WTC11 (cell line): ENCODE measurements at regions of chr13 and their contacts with region 1.

Region 1: GRCh38 chr13:26502826-26503225 is 54.7 kb upstream of the WASF3 start:
- DNase-seq: no peak
- ATAC-seq: peak; percentile 74
- H3K4me3 Mint-ChIP-seq: no peak overlapping the region
- H3K27ac Mint-ChIP-seq: no peak overlapping the region
- H3K4me1 Mint-ChIP-seq: peaks cover 11% of the 10 kb centered on the region
- H3K27me3 Mint-ChIP-seq: no peaks in the 10 kb centered on the region; the same call in 1 of the 2 replicates
- CTCF ChIP-seq: no peak

Region 2: DNA sequence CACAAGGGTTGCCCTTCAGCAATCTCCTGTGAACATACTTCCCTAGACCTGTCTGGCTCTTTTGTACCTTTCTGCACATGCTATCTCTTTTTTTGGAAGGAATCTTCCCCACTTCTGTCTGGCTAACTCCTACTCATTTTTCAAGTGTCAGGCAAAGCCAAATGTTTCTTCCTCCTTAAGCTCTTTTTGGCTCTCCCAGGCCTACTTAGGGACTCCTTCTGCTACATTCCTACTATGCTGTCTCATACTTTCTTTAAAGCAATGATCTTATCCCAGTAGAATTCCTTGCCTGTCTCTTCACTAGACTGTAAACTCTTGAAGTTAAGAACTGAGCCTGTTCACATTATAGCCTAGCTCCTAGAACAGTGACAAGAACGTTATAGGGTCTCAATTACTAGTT is 60.3 kb before region 1 on chr13:
- CTCF ChIA-PET with region 1: interaction called, 15 read pairs
- POLR2A ChIA-PET with region 1: no interaction called
- DNase-seq: no peak
- ATAC-seq: no peak
- H3K4me3 Mint-ChIP-seq: no peak overlapping the region
- H3K27ac Mint-ChIP-seq: no peak overlapping the region
- H3K4me1 Mint-ChIP-seq: no peaks in the 10 kb centered on the region
- H3K27me3 Mint-ChIP-seq: no peaks in the 10 kb centered on the region; the same call in 1 of the 2 replicates
- CTCF ChIP-seq: no peak

Region 3: DNA sequence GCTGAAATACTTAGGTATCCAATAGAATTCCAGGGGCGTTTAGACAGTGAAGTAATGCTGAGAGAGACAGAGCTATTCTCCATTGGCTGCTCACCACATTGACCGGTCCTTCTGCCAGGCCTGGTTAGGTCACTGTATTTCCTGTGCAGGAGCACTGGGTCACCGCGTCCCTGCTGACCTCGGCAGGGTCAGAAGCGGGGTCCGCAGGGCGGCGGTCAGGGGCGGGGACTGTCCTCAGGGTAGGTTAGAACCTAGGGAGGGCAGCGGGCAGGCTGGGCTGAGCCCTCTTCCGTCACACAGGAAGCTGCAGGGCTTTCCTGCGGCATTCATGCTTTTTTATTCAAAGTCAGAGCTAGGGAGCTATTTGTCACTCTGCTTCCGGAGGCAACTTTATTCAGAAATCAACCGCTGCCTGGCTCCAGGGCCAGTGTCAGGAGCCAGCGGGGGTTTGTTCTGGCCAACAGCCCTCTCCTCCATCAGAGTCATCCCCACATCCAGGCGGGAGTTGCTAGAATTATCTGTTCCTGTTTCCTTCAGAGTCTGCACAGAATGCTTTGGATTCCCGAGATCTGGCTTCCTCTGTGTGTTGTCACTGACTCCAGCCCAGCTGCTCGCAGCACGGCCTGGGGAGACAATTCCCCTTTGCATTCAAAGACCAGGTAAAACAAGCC is 26.6 kb before region 1 on chr13:
- CTCF ChIA-PET with region 1: interaction called, 32 read pairs
- POLR2A ChIA-PET with region 1: no interaction called
- DNase-seq: peak; percentile 51
- ATAC-seq: peak; percentile 60
- H3K4me3 Mint-ChIP-seq: peak overlapping the region; percentile 68
- H3K27ac Mint-ChIP-seq: peak overlapping the region; percentile 97
- H3K4me1 Mint-ChIP-seq: peaks cover 53% of the 10 kb centered on the region
- H3K27me3 Mint-ChIP-seq: no peaks in the 10 kb centered on the region
- CTCF ChIP-seq: no peak

Region 4: DNA sequence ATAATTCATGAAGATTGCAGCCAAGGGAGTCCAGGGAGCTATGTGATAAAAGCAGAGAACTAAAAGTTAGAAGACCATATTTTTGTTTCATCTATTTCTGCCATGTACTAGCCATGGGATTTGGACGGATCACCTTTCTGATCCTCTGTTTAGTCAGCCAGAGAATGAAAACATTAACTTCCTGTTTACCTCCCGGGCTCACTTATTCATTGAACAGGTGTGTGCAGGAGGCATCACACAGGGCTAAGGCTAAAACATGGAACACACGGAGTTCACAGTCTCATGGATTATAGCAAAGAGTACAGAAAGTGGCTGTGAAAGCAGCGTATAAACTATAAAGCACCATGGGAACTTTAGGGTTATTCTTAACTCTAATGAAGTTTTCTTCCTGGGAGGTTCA is 161.0 kb after region 1 on chr13:
- CTCF ChIA-PET with region 1: no interaction called
- POLR2A ChIA-PET with region 1: no interaction called
- DNase-seq: no peak
- ATAC-seq: no peak
- H3K4me3 Mint-ChIP-seq: no peak overlapping the region
- H3K27ac Mint-ChIP-seq: peak overlapping the region; percentile 2; the same call in 1 of the 2 replicates
- H3K4me1 Mint-ChIP-seq: peaks cover 4% of the 10 kb centered on the region
- H3K27me3 Mint-ChIP-seq: no peaks in the 10 kb centered on the region
- CTCF ChIP-seq: no peak